ENCODE measurements at regions of chr1 and their contacts with region 1.

Region 1: DNA sequence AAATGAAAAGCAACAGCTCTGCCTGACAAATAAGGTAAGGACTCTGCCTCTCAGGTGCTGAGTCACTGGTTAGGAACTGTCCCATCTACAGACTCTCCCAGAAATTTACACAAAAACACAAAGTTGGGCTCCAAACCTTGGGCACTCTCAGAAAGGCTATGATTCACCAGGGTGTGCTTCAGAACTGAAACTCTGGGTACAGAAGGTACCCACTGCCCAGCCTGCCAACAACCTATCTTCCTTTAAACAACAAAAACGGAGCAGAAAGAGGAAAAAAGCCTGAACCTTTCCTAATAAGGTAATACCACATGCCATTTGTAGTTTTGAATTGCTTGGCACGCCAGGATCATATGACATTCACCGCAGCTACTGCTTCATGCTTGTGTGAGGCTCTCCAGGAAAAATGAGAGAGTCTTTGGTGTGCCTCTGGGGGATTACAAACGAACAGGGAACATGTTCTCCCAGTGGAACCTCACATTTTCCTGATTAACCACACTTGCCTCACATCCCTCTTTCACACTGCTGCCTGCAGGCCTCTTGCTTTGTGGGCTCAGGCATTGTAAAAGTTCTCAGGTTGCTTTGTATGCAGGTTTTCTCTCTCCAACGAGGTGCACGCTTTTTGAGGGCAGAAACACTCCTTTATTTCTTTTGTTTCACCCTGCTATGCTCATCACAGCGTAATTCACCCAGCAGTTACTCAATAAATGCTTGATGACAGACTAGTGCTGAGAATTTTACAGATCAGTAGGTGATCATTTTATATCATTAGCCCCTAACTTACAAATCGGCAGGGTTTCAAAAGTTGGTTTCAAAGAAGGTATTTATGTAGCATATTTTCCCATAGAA is 65.1 kb downstream of the GADD45A start:
- DNase-seq: no peak
- H3K4me3 ChIP-seq: no peak overlapping the region
- H3K27ac ChIP-seq: peak overlapping the region; percentile 60
- H3K4me1 ChIP-seq: peaks cover 81% of the 10 kb centered on the region
- H3K27me3 ChIP-seq: no peaks in the 10 kb centered on the region
- CTCF ChIP-seq: no peak

Region 2: DNA sequence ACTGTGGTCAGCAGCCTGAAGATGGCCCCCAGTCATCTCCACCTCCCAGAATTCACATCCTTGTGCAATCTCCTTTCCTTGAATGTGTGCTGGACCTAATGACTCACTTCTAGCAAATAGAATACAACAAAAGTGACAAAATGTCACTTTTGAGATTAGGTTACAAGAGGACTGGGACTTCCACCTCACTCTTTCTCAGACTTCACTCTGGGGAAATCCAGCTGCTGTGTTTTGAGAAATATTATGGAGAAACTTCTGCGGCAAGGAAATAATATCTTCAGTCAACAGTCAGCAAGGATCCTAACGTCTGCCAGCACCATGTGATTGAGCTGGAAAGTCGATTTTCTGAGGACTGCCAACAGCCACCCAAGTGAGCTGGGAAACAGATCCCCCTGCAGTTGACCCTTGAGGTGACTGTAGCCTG is 135.5 kb before region 1 on chr1:
- intact Hi-C with region 1: no loop called
- DNase-seq: no peak
- H3K4me3 ChIP-seq: no peak overlapping the region
- H3K27ac ChIP-seq: no peak overlapping the region
- H3K4me1 ChIP-seq: peaks cover 19% of the 10 kb centered on the region
- H3K27me3 ChIP-seq: no peaks in the 10 kb centered on the region
- CTCF ChIP-seq: no peak

Region 3: DNA sequence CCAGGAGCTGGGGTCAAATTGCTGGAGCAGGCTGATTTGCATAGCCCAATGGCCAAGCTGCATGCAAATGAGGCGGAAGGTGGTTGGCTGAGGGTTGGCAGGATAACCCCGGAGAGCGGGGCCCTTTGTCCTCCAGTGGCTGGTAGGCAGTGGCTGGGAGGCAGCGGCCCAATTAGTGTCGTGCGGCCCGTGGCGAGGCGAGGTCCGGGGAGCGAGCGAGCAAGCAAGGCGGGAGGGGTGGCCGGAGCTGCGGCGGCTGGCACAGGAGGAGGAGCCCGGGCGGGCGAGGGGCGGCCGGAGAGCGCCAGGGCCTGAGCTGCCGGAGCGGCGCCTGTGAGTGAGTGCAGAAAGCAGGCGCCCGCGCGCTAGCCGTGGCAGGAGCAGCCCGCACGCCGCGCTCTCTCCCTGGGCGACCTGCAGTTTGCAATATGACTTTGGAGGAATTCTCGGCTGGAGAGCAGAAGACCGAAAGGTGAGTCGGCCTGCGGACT is 65.0 kb before region 1 on chr1 and contains the start of gene GADD45A:
- intact Hi-C with region 1: loop called (anchors 5 kb)
- DNase-seq: peak; percentile 98
- H3K4me3 ChIP-seq: peak within 1 kb of the TSS; percentile 97
- H3K27ac ChIP-seq: peak within 1 kb of the TSS; percentile 99
- H3K4me1 ChIP-seq: peaks cover 63% of the 10 kb centered on the region
- H3K27me3 ChIP-seq: no peaks in the 10 kb centered on the region
- CTCF ChIP-seq: no peak
- total RNA-seq, gene GADD45A: 65.0 TPM

Measured in left ventricle myocardium inferior (tissue), 1 donor.